AG04449 (cell line): ENCODE measurements at regions of chr2 and their contacts with region 1.

Region 1: GRCh38 chr2:219642465-219643080 is 15.1 kb downstream of the SLC4A3 start:
- DNase-seq: peak; percentile 82
- H3K4me3 ChIP-seq: no peak overlapping the region
- CTCF ChIP-seq: peak; percentile 100

Region 2: GRCh38 chr2:219543601-219544358 is 98.8 kb before region 1 on chr2 and contains the starts of genes CHPF and TMEM198:
- CTCF ChIA-PET with region 1: interaction called, 147 read pairs
- POLR2A ChIA-PET with region 1: interaction called, 3 read pairs
- DNase-seq: peak; percentile 87
- H3K4me3 ChIP-seq: peak within 1 kb of the TSS; percentile 80
- CTCF ChIP-seq: no peak

Region 3: DNA sequence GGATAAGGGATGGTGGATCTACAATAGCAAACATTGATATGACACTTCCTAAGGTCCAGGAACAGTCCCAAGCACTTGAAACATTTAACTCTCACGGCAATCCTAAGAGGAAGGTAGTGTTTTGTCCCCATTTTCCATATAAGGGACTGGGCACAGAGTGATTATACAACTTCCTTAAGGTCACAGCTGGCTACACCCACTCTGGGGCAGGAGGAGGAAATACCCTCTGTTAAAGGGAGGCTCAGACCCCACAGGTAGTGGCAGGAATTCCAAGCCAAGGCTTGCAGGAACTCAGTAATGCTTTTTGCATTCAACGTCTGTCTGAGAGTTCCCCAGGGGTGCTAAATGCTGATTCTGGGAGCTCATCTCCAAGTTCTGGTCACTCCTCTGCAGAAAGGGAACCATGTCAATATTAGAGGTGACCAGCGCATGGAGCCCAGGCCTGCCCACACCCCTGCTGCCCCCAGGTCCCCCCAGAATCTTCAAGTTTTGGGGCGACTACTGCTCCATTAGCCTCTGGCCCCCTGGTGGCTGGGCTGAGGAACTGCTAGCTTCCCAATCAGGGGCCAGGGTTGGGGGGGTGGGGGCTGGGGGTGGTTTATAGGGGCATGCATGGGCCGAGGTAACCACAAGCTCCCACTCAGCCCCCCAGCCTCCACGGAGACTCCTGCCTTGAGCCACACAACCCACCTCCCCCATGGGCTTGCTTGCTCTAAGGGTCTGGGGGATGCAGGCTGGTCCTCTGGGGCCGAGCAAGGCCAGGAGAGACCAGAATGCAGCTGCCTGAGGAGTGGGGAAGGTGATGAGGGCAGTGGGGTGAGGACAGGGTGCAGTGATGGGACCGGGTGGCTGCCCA is 82.3 kb before region 1 on chr2:
- CTCF ChIA-PET with region 1: interaction called, 35 read pairs
- POLR2A ChIA-PET with region 1: no interaction called
- DNase-seq: no peak
- H3K4me3 ChIP-seq: no peak overlapping the region
- CTCF ChIP-seq: peak; percentile 69

Region 4: GRCh38 chr2:219597552-219598307 is 44.8 kb before region 1 on chr2 and contains the start of gene STK11IP:
- CTCF ChIA-PET with region 1: interaction called, 32 read pairs
- POLR2A ChIA-PET with region 1: interaction called, 3 read pairs
- DNase-seq: peak; percentile 70
- H3K4me3 ChIP-seq: peak within 1 kb of the TSS; percentile 84
- CTCF ChIP-seq: no peak

Region 5: GRCh38 chr2:219619235-219619634 is 23.3 kb before region 1 on chr2:
- CTCF ChIA-PET with region 1: interaction called, 10 read pairs
- POLR2A ChIA-PET with region 1: no interaction called
- DNase-seq: no peak
- H3K4me3 ChIP-seq: no peak overlapping the region
- CTCF ChIP-seq: no peak

Region 6: DNA sequence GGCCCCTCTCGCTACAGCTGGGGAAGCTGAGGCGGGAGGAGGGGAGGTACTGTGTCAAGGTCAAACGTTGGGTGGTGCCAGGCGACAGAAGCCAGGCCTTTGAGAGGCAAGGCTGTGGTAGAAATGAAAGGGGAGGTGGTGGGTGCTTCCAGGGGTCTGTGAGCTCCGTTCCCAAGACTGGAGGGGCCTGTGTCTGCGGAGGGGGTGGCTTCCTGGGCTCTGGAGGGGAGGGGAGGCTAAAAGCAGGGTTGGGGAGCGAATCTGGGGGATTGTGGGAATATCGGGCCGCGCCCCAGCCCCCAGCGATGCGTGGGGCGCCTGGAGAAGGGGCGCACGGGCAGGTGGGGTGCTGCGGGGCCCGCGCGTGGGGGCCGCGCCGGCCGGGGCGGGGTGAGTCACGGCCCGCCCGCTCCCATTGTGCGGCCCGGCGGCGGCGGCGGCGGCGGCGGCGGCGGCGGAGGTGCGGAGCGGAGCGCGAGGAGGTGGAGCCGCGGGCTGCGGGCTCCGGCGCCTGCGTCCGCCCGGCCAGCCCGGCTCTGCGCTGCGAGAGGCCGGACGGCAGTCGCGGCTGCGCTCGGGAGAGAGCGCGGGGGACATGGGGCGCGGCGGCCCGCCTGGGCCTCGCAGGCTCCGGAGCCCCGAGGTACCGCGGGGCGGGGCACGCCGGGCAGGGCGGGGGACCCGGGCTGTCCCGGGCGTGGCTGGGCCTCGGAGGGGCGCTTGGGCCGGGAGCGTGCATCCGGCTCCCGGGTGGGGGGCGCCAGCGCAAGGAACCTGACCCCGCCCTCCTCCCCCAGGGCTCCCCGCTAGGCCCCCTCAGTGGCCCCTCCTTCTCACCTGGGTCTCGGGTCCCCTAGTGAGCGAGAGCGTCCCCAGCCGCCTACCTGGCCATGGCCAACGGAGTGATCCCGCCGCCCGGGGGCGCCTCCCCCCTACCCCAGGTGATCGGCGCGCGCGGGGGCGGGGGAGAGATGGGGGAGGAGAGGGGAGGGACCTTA is 15.2 kb before region 1 on chr2 and contains the start of gene SLC4A3:
- CTCF ChIA-PET with region 1: interaction called, 65 read pairs
- POLR2A ChIA-PET with region 1: interaction called, 3 read pairs
- DNase-seq: no peak
- H3K4me3 ChIP-seq: peak within 1 kb of the TSS; percentile 60
- CTCF ChIP-seq: peak; percentile 11

Region 7: DNA sequence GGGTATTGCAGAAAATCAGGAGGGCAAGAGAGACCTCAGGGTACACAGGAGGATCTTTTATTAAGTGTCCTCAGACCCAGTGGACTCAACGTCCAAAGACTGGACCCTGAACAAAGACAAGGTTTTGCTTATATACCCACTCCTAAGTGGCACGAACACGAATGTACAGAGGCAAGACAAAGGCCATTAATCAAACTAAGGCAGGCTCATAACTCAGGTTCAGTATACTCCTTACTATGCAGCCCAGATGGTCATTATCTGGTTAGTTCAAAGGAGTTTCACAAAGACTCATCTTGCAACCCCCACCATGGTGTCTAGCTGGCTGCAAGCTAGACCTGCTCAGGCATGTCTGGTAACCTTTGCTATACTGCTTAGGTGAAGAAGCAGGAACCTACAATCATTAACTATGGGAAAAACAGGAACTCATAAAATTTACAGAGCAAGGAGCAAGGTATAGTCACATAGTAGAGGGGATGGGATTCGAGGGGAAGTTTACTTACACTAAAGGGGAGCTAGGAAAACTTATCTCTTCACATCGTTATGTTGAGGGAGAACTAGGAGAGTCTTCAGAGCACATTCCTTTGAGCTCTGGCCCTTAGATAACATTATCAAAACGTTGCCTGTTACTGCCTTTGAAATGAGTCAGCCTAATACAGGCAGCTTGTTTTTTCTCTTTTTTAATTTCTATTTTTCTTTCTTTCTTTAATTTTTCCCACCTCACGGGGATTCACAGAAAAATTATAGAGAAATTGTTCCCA is 18.8 kb after region 1 on chr2:
- CTCF ChIA-PET with region 1: interaction called, 68 read pairs
- POLR2A ChIA-PET with region 1: no interaction called
- DNase-seq: no peak
- H3K4me3 ChIP-seq: no peak overlapping the region
- CTCF ChIP-seq: no peak

Region 8: GRCh38 chr2:219803294-219803693 is 160.7 kb after region 1 on chr2:
- CTCF ChIA-PET with region 1: no interaction called
- POLR2A ChIA-PET with region 1: no interaction called
- DNase-seq: no peak
- H3K4me3 ChIP-seq: no peak overlapping the region
- CTCF ChIP-seq: no peak